Adrenal gland (tissue), 19 donors: ENCODE measurements at regions of chr1 and their contacts with region 1.

Region 1: GRCh38 chr1:109984456-109985275 is at the start of gene AHCYL1:
- DNase-seq: peak; percentile 99 to 100 (median 100)
- H3K4me3 ChIP-seq: peak within 1 kb of the TSS; percentile 7 to 96 (median 70)
- H3K27ac ChIP-seq: peak within 1 kb of the TSS; percentile 92 to 98 (median 96)
- H3K4me1 ChIP-seq: peaks cover 26 to 34% of the 10 kb centered on the region in 2 donors
- H3K27me3 ChIP-seq: no peaks in the 10 kb centered on the region
- CTCF ChIP-seq: peak; percentile 96 to 100 (median 99)
- POLR2A ChIP-seq: peak; percentile 97 to 99
- total RNA-seq, gene AHCYL1: 60.7 to 147 (median 112) TPM

Region 2: DNA sequence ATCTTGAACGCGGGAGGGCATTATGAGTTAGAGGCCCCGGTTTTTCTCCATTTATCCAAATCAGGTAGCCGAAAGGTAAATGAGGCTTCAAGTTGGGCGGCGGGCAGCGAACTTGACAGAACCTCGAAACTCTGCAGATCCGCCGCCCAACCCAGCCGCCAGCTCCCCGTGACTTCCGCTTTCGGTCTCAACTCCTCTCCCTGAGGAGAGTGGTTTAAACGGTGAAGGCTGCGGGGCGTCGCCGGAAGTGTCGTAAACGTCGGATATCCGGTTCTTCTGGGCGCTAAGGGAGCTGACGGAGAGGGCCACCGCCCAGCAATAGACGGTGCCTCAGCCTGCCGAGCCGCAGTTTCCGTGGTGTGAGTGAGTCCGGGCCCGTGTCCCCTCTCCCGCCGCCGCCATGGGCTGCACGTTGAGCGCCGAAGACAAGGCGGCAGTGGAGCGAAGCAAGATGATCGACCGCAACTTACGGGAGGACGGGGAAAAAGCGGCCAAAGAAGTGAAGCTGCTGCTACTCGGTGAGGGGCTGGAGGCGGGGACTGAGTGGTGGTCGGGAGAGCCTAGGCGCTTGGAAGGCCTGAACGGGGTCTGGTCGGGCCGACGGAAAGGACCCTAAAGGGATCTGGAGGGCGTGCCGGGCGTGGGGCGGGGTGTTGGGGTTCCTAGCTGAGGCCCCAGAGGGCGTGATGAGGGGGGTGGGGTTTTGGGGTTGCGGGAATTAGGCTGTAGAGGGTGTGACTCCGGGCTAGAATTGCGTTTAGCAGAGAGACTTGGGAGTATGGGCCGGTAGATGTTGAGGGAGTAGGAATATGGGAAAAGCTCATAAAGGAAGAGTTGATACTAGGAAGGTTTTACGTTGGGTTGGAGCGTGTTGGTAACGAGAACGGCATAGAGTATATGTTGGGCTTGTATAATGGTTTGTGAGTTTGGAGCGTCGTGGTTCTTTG is 436.1 kb before region 1 on chr1 and contains the start of gene GNAI3:
- intact Hi-C with region 1: loop called in 1 of 2 experiments (anchors 10 kb)
- DNase-seq: peak; percentile 94 to 99 (median 97)
- H3K4me3 ChIP-seq: peak within 1 kb of the TSS; percentile 26 to 85 (median 66)
- H3K27ac ChIP-seq: peak within 1 kb of the TSS; percentile 79 to 94 (median 90)
- H3K4me1 ChIP-seq: peaks cover 11 to 45% of the 10 kb centered on the region in 2 donors
- H3K27me3 ChIP-seq: no peaks in the 10 kb centered on the region
- CTCF ChIP-seq: no peak
- POLR2A ChIP-seq: peak; percentile 98 to 99
- total RNA-seq, gene GNAI3: 2.8 to 12.0 (median 5.8) TPM

Region 3: GRCh38 chr1:109643385-109644230 is 341.1 kb before region 1 on chr1:
- intact Hi-C with region 1: loop called in 1 of 2 experiments (anchors 5 kb)
- DNase-seq: peak; percentile 74 to 91 (median 85)
- H3K4me3 ChIP-seq: no peak overlapping the region
- H3K27ac ChIP-seq: no peak overlapping the region
- H3K4me1 ChIP-seq: no peaks in the 10 kb centered on the region
- H3K27me3 ChIP-seq: no peaks in the 10 kb centered on the region
- CTCF ChIP-seq: peak; percentile 79 to 91 (median 84)
- POLR2A ChIP-seq: no peak

Region 4: GRCh38 chr1:109655601-109656519 is 328.8 kb before region 1 on chr1 and contains the start of gene GSTM4:
- intact Hi-C with region 1: loop called in 1 of 2 experiments (anchors 10 kb)
- DNase-seq: peak; percentile 81 to 91 (median 86)
- H3K4me3 ChIP-seq: peak within 1 kb of the TSS; percentile 5 to 57 (median 36)
- H3K27ac ChIP-seq: peak within 1 kb of the TSS; percentile 5 to 89 (median 61)
- H3K4me1 ChIP-seq: peaks cover 7 to 11% of the 10 kb centered on the region in 2 donors
- H3K27me3 ChIP-seq: no peaks in the 10 kb centered on the region
- CTCF ChIP-seq: no peak
- POLR2A ChIP-seq: peak in 1 of 2 donors; percentile 65
- total RNA-seq, gene GSTM4: 17.3 to 71.0 (median 31.9) TPM

Region 5: DNA sequence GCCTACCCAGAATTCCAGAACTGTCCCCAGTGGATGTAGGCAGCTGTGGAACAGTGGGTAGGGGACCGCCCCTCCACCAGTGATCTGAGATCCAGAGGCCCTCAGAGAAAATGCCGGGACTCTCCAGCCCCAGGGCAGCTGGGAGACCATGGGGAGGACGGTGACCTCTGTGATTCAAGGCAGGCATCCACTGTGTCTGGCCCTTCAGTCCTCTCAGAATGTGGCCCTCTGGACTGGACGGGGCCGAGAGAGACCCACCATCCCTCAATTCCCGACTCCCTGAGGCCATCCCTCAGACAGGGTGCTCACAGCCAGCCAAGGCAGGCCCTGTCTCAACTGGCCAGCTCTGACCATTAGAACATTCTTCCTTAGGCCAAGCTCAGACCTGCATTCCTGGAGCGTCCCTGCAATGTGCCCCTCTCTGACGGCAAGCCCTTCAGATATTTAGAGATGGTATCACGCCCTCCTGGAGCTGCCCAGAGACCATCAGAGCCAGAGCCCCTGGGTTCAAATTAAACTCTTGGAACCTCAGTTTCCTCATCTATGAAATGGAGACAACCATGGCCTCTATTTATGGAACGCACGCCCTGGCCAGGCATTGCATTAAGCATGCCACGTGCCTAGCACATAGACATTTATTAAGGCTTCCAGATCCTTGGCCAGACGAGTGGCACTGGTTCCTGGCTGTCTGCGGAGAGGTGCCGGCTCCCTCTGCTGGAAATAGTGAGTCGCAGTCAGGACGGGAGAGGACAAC is 211.3 kb before region 1 on chr1:
- intact Hi-C with region 1: loop called (anchors 1 to 2 kb)
- DNase-seq: peak; percentile 82 to 96 (median 90)
- H3K4me3 ChIP-seq: no peak overlapping the region
- H3K27ac ChIP-seq: no peak overlapping the region
- H3K4me1 ChIP-seq: no peaks in the 10 kb centered on the region
- H3K27me3 ChIP-seq: no peaks in the 10 kb centered on the region
- CTCF ChIP-seq: peak; percentile 74 to 97 (median 92)
- POLR2A ChIP-seq: no peak

Region 6: GRCh38 chr1:109910123-109910962 is 74.3 kb before region 1 on chr1 and contains the start of gene CSF1:
- intact Hi-C with region 1: loop called in 1 of 2 experiments (anchors 5 kb)
- DNase-seq: peak; percentile 86 to 95 (median 93)
- H3K4me3 ChIP-seq: peak within 1 kb of the TSS; percentile 31 to 84 (median 62)
- H3K27ac ChIP-seq: peak within 1 kb of the TSS in 4 of 5 donors; percentile 49 to 83 (median 80)
- H3K4me1 ChIP-seq: peaks cover 32 to 48% of the 10 kb centered on the region in 2 donors
- H3K27me3 ChIP-seq: no peaks in the 10 kb centered on the region
- CTCF ChIP-seq: no peak
- POLR2A ChIP-seq: peak; percentile 85 to 87
- total RNA-seq, gene CSF1: 3.8 to 295 (median 101) TPM

Region 7: DNA sequence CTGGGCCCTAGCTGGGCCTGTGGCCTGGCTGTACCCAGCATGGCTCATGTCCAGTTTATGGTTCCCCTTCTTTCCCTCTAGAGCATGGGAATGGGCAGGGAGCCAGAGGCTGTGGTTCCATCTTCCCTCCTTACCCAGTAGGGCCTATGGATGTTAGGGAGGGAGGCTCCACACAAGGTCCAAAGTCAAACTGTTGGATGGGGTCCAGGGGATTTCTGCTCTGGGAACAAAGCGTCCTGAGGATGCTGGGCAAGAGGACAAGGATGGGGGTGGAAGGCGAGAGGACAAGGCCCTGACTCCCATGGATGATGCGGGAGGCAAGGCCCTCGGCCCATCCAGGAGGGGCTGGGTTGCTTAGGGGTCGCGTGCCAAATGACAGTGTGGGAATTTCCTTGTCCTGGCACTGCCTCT is 56.8 kb before region 1 on chr1:
- intact Hi-C with region 1: loop called in 1 of 2 experiments (anchors 5 kb)
- DNase-seq: peak; percentile 60 to 90 (median 82)
- H3K4me3 ChIP-seq: no peak overlapping the region
- H3K27ac ChIP-seq: peak overlapping the region in 4 of 5 donors; percentile 31 to 87 (median 68)
- H3K4me1 ChIP-seq: peaks cover 13 to 55% of the 10 kb centered on the region in 2 donors
- H3K27me3 ChIP-seq: no peaks in the 10 kb centered on the region
- CTCF ChIP-seq: no peak
- POLR2A ChIP-seq: no peak

Region 8: GRCh38 chr1:110034451-110035235 is 50.0 kb after region 1 on chr1 and contains the start of gene STRIP1:
- intact Hi-C with region 1: no loop called
- DNase-seq: peak; percentile 94 to 98 (median 94)
- H3K4me3 ChIP-seq: peak within 1 kb of the TSS; percentile 50 to 98 (median 74)
- H3K27ac ChIP-seq: peak within 1 kb of the TSS; percentile 63 to 88 (median 81)
- H3K4me1 ChIP-seq: peaks cover 3 to 25% of the 10 kb centered on the region in 2 donors
- H3K27me3 ChIP-seq: no peaks in the 10 kb centered on the region
- CTCF ChIP-seq: no peak
- POLR2A ChIP-seq: peak in 1 of 2 donors; percentile 48
- total RNA-seq, gene STRIP1: 25.0 to 47.9 (median 37.0) TPM

Region 9: GRCh38 chr1:110262846-110263631 is 278.4 kb after region 1 on chr1:
- intact Hi-C with region 1: no loop called
- DNase-seq: peak in 2 of 7 donors; percentile 10 to 19
- H3K4me3 ChIP-seq: no peak overlapping the region
- H3K27ac ChIP-seq: no peak overlapping the region
- H3K4me1 ChIP-seq: no peaks in the 10 kb centered on the region
- H3K27me3 ChIP-seq: no peaks in the 10 kb centered on the region
- CTCF ChIP-seq: no peak
- POLR2A ChIP-seq: no peak